Ovary (tissue), 10 donors: ENCODE measurements at regions of chr18 and their contacts with region 1.

Region 1: GRCh38 chr18:36186911-36187834 is at the start of gene MOCOS:
- DNase-seq: peak; percentile 81 to 91 (median 89)
- H3K4me3 ChIP-seq: peak within 1 kb of the TSS; percentile 68
- H3K27ac ChIP-seq: peak within 1 kb of the TSS; percentile 17 to 82
- H3K4me1 ChIP-seq: peaks cover 14% of the 10 kb centered on the region
- H3K27me3 ChIP-seq: no peaks in the 10 kb centered on the region
- CTCF ChIP-seq: no peak
- EP300 ChIP-seq: no peak
- POLR2A ChIP-seq: peak; percentile 46
- total RNA-seq, gene MOCOS: 5.4 to 35.5 (median 12.6) TPM

Region 2: GRCh38 chr18:36129300-36130038 is 57.7 kb before region 1 on chr18 and contains the starts of genes ELP2 and SLC39A6:
- intact Hi-C with region 1: loop called in 1 of 4 experiments (anchors 5 kb)
- DNase-seq: peak; percentile 94 to 97 (median 96)
- H3K4me3 ChIP-seq: peak within 1 kb of the TSS; percentile 79
- H3K27ac ChIP-seq: peak within 1 kb of the TSS; percentile 84 to 92
- H3K4me1 ChIP-seq: peaks cover 15% of the 10 kb centered on the region
- H3K27me3 ChIP-seq: no peaks in the 10 kb centered on the region
- CTCF ChIP-seq: peak in 1 of 3 donors; percentile 20
- EP300 ChIP-seq: no peak
- POLR2A ChIP-seq: peak; percentile 67
- total RNA-seq, gene ELP2: 63.6 to 144 (median 111) TPM
- total RNA-seq, gene SLC39A6: 51.4 to 96.5 (median 57.2) TPM

Region 3: GRCh38 chr18:36139250-36139649 is 47.9 kb before region 1 on chr18:
- intact Hi-C with region 1: loop called in 1 of 4 experiments (anchors 5 kb)
- DNase-seq: no peak
- H3K4me3 ChIP-seq: no peak overlapping the region
- H3K27ac ChIP-seq: no peak overlapping the region
- H3K4me1 ChIP-seq: no peaks in the 10 kb centered on the region
- H3K27me3 ChIP-seq: no peaks in the 10 kb centered on the region
- CTCF ChIP-seq: no peak
- EP300 ChIP-seq: no peak
- POLR2A ChIP-seq: no peak

Region 4: GRCh38 chr18:36149514-36150289 is 37.5 kb before region 1 on chr18:
- intact Hi-C with region 1: loop called in 1 of 4 experiments (anchors 5 kb)
- DNase-seq: no peak
- H3K4me3 ChIP-seq: no peak overlapping the region
- H3K27ac ChIP-seq: no peak overlapping the region
- H3K4me1 ChIP-seq: peaks cover 3% of the 10 kb centered on the region
- H3K27me3 ChIP-seq: no peaks in the 10 kb centered on the region
- CTCF ChIP-seq: no peak
- EP300 ChIP-seq: no peak
- POLR2A ChIP-seq: no peak

Region 5: GRCh38 chr18:36680042-36680441 is 492.9 kb after region 1 on chr18:
- intact Hi-C with region 1: no loop called
- DNase-seq: no peak
- H3K4me3 ChIP-seq: no peak overlapping the region
- H3K27ac ChIP-seq: no peak overlapping the region
- H3K4me1 ChIP-seq: no peaks in the 10 kb centered on the region
- H3K27me3 ChIP-seq: no peaks in the 10 kb centered on the region
- CTCF ChIP-seq: no peak
- EP300 ChIP-seq: no peak
- POLR2A ChIP-seq: no peak